ENCODE measurements at regions of chr3 and their contacts with region 1.

Region 1: DNA sequence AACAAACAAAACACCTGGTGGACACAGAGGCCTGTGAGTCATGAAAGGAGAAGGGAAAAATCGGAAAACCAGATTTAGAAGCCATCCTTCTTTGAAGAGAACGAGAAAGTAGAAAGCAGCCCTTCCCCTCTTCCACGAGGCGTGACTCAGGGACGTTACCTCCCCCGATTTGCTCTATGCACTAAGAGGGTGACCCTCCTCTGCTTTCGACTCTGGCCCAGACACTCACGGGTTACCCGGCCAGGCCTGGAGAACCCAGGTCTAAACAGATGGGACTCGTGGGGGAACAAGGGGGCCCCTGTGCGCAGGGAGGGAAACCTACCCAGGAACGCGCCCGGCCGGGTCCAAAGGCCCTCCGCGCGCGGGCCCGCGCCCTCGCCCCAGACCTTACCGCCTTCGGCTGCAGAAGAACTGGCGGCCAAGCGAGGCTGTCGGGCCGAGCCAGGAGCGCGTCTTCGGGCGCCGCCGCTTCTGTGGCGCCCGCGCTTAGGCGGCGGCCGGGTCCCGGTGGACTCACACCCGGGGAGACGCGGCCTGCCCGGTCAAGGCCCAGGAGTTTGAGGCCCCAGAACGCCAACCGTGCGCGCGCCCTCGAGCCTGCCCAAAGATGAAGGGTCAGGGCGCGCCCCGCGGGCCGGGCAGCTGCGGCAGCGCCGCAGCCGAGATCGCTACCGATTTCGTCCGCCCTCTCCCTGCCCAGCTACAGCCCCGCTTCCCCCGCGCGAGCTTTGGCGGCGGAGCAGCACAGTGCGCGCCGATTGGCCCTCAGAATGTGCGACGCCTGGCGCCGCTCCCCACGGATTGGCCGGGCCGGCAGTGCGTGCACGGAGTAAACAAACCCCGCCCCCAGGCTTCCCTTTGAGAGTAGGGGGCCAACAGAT is at the start of gene TFDP2:
- DNase-seq: peak; percentile 89 to 93
- ATAC-seq: peak; percentile 100
- H3K4me3 ChIP-seq: peak within 1 kb of the TSS; percentile 59 to 90 (median 77)
- H3K27ac ChIP-seq: peak within 1 kb of the TSS; percentile 16 to 89 (median 78)
- H3K4me1 ChIP-seq: peaks cover 3 to 25% (median 18%) of the 10 kb centered on the region in 9 donors
- H3K27me3 ChIP-seq: no peaks in the 10 kb centered on the region
- CTCF ChIP-seq: no peak
- total RNA-seq, gene TFDP2: 44.9 to 77.8 (median 56.0) TPM

Region 2: DNA sequence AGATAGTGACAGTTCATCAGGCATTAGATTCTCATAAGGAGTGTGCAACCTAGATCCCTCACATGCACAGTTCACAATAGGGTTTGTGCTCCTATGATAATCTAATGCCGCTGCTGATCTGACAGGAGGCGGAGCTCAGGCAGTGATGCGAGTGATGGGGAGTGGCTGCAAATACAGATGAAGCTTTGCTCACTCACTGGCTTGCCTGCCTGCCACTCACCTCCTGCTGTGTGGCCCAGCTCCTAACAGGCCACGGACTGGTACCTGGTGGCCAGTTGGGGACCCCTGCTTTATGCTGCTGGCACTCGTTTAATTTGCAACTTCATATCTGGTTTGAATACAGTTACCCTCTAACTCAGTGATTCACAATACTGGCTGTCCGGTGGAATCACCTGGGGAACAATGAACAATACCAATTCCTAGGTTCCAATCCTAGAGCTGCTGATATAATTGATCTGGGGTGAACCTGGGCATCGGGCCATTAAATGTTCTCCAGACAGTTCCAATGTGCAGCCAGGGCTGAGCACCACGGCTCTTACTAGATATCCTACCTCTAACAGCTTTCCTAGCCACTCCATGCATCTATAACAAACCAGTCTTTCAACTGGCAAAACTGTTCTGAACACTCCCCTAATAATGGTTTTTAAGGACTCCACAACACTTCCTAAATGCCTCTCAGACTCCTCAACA is 141.2 kb before region 1 on chr3:
- intact Hi-C with region 1: no loop called
- DNase-seq: no peak
- ATAC-seq: no peak
- H3K4me3 ChIP-seq: no peak overlapping the region
- H3K27ac ChIP-seq: no peak overlapping the region
- H3K4me1 ChIP-seq: peaks cover 0 to 4% (median 0%) of the 10 kb centered on the region in 9 donors
- H3K27me3 ChIP-seq: no peaks in the 10 kb centered on the region
- CTCF ChIP-seq: no peak

Region 3: GRCh38 chr3:142022381-142022780 is 126.7 kb before region 1 on chr3:
- intact Hi-C with region 1: loop called in 2 of 10 experiments (anchors 5 to 10 kb)
- DNase-seq: no peak
- ATAC-seq: peak in 4 of 8 donors; percentile 40 to 70 (median 59)
- H3K4me3 ChIP-seq: no peak overlapping the region
- H3K27ac ChIP-seq: peak overlapping the region in 7 of 10 donors; percentile 4 to 48 (median 18)
- H3K4me1 ChIP-seq: peaks cover 0 to 49% (median 37%) of the 10 kb centered on the region in 9 donors
- H3K27me3 ChIP-seq: no peaks in the 10 kb centered on the region
- CTCF ChIP-seq: peak in 5 of 9 donors; percentile 11 to 34 (median 28)

Region 4: DNA sequence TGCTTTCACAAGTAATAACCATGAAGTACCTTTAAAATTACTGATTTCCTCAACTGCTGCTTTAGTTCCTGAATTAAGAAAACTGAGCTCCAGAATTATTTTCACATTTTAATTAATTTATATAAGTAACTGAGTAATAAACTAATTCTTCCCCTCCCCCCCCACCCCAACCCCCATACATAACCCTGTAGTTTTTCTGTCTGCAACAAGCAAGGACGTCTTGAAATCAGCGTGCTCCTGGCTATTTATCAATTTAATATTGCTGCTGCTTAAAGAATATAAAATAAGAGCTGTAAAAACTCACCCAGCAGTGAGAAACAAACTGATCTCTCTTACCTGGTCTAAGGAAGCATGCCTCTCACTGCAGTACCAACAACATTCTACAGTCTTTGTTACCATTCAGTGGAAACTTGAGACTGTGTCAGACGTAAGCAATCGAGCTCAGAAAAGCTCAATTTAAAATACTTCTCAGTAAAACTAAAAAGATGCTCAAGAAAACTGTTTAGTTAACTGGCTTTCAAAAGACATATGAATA is 120.7 kb before region 1 on chr3:
- intact Hi-C with region 1: loop called in 2 of 10 experiments (anchors 5 to 10 kb)
- DNase-seq: peak in 1 of 2 donors; percentile 58
- ATAC-seq: peak in 7 of 8 donors; percentile 67 to 89 (median 83)
- H3K4me3 ChIP-seq: peak overlapping the region; percentile 11 to 61 (median 54)
- H3K27ac ChIP-seq: peak overlapping the region in 8 of 10 donors; percentile 5 to 73 (median 44)
- H3K4me1 ChIP-seq: peaks cover 0 to 35% (median 22%) of the 10 kb centered on the region in 9 donors
- H3K27me3 ChIP-seq: no peaks in the 10 kb centered on the region
- CTCF ChIP-seq: peak in 1 of 9 donors; percentile 20

Region 5: DNA sequence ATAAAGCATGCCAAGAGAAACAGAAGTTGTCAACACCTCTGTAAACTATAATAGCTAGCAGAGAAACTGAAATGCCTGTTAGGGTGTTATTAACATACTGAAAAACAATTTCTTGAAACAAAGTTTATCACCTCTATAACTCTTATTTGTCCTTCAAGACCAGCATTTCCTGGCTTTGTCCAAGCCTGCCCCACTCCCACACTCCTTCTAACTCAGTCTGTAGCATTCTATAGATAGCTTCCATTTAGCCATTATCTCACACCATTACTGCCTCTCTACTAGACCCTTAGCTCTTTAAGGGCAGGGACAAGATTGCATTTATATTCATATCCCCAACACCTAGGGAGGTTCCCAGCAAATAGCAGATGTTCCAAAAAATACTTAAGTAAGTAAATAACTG is 39.8 kb after region 1 on chr3:
- intact Hi-C with region 1: no loop called
- DNase-seq: no peak
- ATAC-seq: no peak
- H3K4me3 ChIP-seq: no peak overlapping the region
- H3K27ac ChIP-seq: no peak overlapping the region
- H3K4me1 ChIP-seq: peaks cover 0 to 11% (median 5%) of the 10 kb centered on the region in 9 donors
- H3K27me3 ChIP-seq: no peaks in the 10 kb centered on the region
- CTCF ChIP-seq: no peak

Region 6: GRCh38 chr3:142296507-142296906 is 147.5 kb after region 1 on chr3:
- intact Hi-C with region 1: no loop called
- DNase-seq: no peak
- ATAC-seq: no peak
- H3K4me3 ChIP-seq: no peak overlapping the region
- H3K27ac ChIP-seq: no peak overlapping the region
- H3K4me1 ChIP-seq: no peaks in the 10 kb centered on the region
- H3K27me3 ChIP-seq: no peaks in the 10 kb centered on the region
- CTCF ChIP-seq: no peak